Naive thymus-derived CD8-positive, alpha-beta T cell (primary cell): ENCODE measurements at regions of chr1 and their contacts with region 1.

Region 1: GRCh38 chr1:180631766-180632325 is at the start of gene XPR1:
- DNase-seq: peak; percentile 88 to 99 (median 96)
- ATAC-seq: peak; percentile 92 to 96
- H3K4me3 Mint-ChIP-seq: peak within 1 kb of the TSS in 2 of 10 donors; percentile 48 to 83
- H3K27ac Mint-ChIP-seq: peak within 1 kb of the TSS in 6 of 10 donors; percentile 19 to 96 (median 92)
- H3K4me1 Mint-ChIP-seq: peaks cover 7 to 18% (median 12%) of the 10 kb centered on the region in 4 donors
- H3K27me3 Mint-ChIP-seq: peaks cover 0 to 5% (median 3%) of the 10 kb centered on the region in 5 donors
- polyA plus RNA-seq, gene XPR1: 2.8 to 4.6 (median 4.0) TPM

Region 2: GRCh38 chr1:180502360-180503273 is 129.2 kb before region 1 on chr1 and contains the start of gene ACBD6:
- POLR2A ChIA-PET with region 1: interaction called, 12 read pairs
- DNase-seq: peak; percentile 70 to 91 (median 87)
- ATAC-seq: peak; percentile 88 to 89
- H3K4me3 Mint-ChIP-seq: peak within 1 kb of the TSS; percentile 93 to 97 (median 96)
- H3K27ac Mint-ChIP-seq: peak within 1 kb of the TSS; percentile 93 to 99 (median 98)
- H3K4me1 Mint-ChIP-seq: peaks cover 19 to 43% (median 35%) of the 10 kb centered on the region in 4 donors
- H3K27me3 Mint-ChIP-seq: no peaks in the 10 kb centered on the region
- polyA plus RNA-seq, gene ACBD6: 45.8 to 46.4 (median 46.4) TPM

Region 3: GRCh38 chr1:180691301-180691913 is 59.6 kb after region 1 on chr1:
- POLR2A ChIA-PET with region 1: no interaction called
- DNase-seq: no peak
- ATAC-seq: no peak
- H3K4me3 Mint-ChIP-seq: no peak overlapping the region
- H3K27ac Mint-ChIP-seq: peak overlapping the region in 3 of 10 donors; percentile 4 to 60 (median 22)
- H3K4me1 Mint-ChIP-seq: peaks cover 25 to 48% (median 36%) of the 10 kb centered on the region in 4 donors
- H3K27me3 Mint-ChIP-seq: no peaks in the 10 kb centered on the region